ENCODE measurements at regions of chr19 and their contacts with region 1.

Region 1: GRCh38 chr19:12757544-12758274 is 6.1 kb downstream of the BEST2 start:
- DNase-seq: peak; percentile 64
- H3K4me3 Mint-ChIP-seq: peak overlapping the region; percentile 27
- H3K27ac Mint-ChIP-seq: no peak overlapping the region
- H3K4me1 Mint-ChIP-seq: peaks cover 13% of the 10 kb centered on the region
- H3K27me3 Mint-ChIP-seq: peaks cover 4% of the 10 kb centered on the region

Region 2: DNA sequence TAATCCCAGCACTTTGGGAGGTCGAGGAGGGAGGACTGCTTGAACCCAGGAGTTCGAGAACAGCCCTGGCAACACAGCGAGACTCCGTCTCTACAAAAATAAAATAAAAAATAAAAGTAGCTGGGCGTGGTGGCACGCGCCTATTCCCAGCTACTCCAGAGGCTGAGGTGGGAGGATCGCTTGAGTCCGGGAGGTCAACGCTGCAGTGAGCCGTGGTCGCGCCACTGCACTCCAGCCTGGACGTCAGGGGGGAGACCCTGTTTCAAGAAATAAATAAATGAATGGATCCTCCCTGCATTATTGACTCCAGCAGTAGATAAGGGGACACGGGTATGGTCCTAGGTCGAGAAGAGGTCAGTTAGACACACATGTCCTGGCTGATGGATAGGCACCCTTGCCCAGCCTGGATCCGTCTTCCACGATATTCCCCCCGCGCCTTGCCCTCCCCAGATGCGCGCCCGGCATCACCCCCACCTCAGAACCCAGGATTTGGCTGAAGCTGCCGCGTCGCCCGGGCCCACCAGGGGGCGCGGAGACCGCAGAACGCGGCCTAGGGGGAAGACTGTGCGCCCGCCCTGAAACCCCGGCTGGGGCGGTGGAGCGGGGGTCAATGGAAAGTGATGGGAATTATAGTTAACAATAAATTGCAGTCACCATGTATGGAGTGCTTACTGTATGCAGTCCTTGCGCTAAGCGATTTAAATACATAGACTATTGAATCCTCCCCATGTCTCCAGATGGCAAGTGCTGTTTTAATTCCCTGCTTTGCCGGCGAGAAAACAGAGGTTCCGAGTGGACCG is 19.7 kb after region 1 on chr19:
- CTCF ChIA-PET with region 1: interaction called, 20 read pairs
- POLR2A ChIA-PET with region 1: no interaction called
- DNase-seq: peak; percentile 77
- H3K4me3 Mint-ChIP-seq: peak overlapping the region; percentile 79
- H3K27ac Mint-ChIP-seq: peak overlapping the region; percentile 89
- H3K4me1 Mint-ChIP-seq: peaks cover 50% of the 10 kb centered on the region
- H3K27me3 Mint-ChIP-seq: no peaks in the 10 kb centered on the region

Region 3: GRCh38 chr19:12907166-12907565 is 149.5 kb after region 1 on chr19:
- CTCF ChIA-PET with region 1: no interaction called
- POLR2A ChIA-PET with region 1: no interaction called
- DNase-seq: no peak
- H3K4me3 Mint-ChIP-seq: no peak overlapping the region
- H3K27ac Mint-ChIP-seq: no peak overlapping the region
- H3K4me1 Mint-ChIP-seq: no peaks in the 10 kb centered on the region
- H3K27me3 Mint-ChIP-seq: no peaks in the 10 kb centered on the region